Cardiac septum (tissue), 1 donor: ENCODE measurements at regions of chr5 and their contacts with region 1.

Region 1: GRCh38 chr5:16934123-16934522 is 2.0 kb downstream of the MYO10 start:
- DNase-seq: no peak

Region 2: DNA sequence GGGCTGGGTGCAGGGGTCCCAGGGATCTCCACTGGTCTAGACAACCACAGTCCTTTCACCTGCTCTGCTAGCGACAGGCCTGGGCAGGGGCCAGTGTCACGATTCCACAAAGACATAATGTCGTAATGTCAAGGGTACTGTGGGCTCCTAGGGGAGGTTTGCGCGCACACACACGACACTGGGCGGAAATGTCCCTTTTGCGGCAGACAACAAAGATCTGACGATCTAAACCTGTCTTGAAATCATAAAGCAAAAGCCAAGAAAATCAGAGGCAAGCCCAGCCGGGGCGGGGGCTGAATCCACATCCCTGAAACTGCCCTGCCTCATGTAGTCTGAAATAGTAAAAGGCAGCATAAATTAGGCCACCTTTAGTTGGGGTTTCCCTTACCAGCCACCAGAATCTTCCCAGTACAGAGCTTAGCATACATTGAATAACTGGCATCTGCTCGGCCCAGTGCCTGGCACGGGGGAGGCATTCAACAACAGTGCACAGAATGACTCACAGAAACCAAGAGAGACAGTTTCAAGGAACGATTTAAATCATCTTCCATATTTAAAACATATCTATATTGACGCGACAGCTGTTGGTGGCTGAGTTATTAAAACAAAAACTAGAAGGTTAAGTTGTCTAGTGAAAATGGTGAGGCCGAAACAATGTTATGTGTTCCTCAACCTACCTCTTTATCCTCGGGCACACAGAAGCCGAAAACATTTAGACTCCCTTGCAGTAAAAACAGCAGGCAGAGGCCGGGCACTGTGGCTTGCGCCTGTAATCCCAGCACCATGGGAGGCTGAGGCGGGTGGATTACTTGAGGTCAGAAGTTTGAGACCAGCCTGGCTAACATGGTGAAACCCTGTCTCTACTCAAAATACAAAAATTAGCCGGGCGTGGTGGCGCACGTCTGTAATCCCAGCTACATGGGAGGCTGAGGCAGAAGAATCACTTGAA is 149.0 kb before region 1 on chr5:
- intact Hi-C with region 1: loop called (anchors 5 kb)
- DNase-seq: no peak

Region 3: GRCh38 chr5:17079562-17079961 is 145.4 kb after region 1 on chr5:
- intact Hi-C with region 1: loop called (anchors 5 kb)
- DNase-seq: no peak

Region 4: DNA sequence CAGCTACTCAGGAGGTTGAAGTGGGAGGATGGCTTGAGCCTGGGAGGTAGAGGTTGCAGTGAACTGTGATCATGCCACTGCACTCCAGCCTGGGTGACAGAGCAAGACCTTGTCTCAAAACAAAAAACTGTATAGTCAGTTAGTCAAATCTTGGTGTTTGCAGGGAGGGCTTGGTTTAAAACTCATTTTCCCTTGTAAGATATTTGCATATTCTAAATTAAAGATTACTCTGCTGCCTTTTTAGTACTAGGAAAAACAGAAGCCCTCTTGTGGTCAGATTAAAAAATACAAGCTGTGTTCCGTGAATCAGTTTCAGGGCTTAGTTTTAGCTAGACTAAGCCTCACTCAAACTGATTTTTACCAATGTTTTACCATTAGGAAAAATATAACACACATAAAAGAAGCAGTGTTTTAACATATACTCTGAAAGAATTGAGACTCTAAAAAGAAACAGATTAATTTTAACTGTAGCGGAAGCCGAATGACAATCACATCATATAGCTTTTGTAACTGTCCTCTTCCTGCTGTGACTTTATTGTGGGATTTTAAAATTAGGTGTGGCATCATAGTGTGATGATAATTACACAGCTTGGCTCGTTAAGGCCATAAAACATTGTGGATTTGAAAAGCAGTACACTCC is 198.4 kb after region 1 on chr5:
- intact Hi-C with region 1: loop called (anchors 2 kb)
- DNase-seq: no peak

Region 5: GRCh38 chr5:17189381-17190036 is 255.4 kb after region 1 on chr5:
- intact Hi-C with region 1: loop called (anchors 5 kb)
- DNase-seq: no peak